Right ventricle myocardium inferior (tissue), 1 donor: ENCODE measurements at regions of chr19 and their contacts with region 1.

Region 1: DNA sequence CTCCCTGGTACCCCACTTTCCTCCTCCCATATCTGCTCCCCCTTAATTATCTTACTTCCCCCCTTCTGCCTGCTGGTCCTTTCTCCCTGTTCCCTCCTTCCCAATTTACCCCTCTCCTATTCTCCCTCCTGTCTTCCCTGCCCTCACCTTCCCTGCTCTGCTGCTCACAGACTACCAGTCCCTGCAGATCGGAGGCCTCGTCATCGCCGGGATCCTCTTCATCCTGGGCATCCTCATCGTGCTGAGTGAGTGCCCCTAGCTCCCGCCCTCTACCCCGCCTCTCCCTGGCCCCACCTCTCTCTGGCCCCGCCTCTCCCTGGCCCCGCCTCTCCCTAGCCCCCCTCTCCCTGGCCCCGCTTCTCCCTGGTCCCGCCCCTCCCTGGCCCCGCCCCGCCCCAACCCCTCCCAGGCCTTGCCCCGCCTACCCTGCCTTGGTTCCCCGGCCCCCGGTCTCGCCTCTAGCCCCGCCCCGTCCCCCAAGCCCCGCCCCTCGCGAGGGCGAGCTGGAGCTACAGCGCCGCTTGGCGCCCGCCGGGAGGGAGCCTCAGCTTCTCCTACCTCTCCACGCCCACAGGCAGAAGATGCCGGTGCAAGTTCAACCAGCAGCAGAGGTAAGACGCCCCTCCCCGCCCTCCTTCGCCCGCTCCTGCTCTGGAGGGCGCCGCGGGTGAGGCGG is 2.0 kb upstream of the FXYD7 start:
- DNase-seq: peak; percentile 97
- ATAC-seq: peak; percentile 71

Region 2: GRCh38 chr19:35044317-35045117 is 96.6 kb before region 1 on chr19:
- intact Hi-C with region 1: loop called (anchors 5 kb)
- DNase-seq: no peak
- ATAC-seq: no peak

Region 3: GRCh38 chr19:35124098-35125060 is 16.7 kb before region 1 on chr19:
- intact Hi-C with region 1: loop called (anchors 1 kb)
- DNase-seq: peak; percentile 96
- ATAC-seq: peak; percentile 95